IMR-90 (cell line): ENCODE measurements at regions of chr12 and their contacts with region 1.

Region 1: GRCh38 chr12:19994970-19995369 is 373.4 kb upstream of the PDE3A start:
- DNase-seq: no peak
- ATAC-seq: no peak
- H3K4me3 ChIP-seq: no peak overlapping the region
- H3K27ac ChIP-seq: no peak overlapping the region
- H3K4me1 ChIP-seq: peaks cover 5% of the 10 kb centered on the region
- H3K27me3 ChIP-seq: no peaks in the 10 kb centered on the region
- CTCF ChIP-seq: 0 out of 2 replicates have a peak, but pooled peaks have one; percentile 25
- POLR2A ChIP-seq: no peak
- RAD21 ChIP-seq: no peak

Region 2: GRCh38 chr12:19719672-19720071 is 275.3 kb before region 1 on chr12:
- CTCF ChIA-PET with region 1: no interaction called
- POLR2A ChIA-PET with region 1: no interaction called
- dilution Hi-C with region 1: no loop called
- in situ Hi-C with region 1: no loop called
- intact Hi-C with region 1: no loop called
- DNase-seq: no peak
- ATAC-seq: no peak
- H3K4me3 ChIP-seq: no peak overlapping the region
- H3K27ac ChIP-seq: no peak overlapping the region
- H3K4me1 ChIP-seq: no peaks in the 10 kb centered on the region; the same call in 1 of the 2 replicates
- H3K27me3 ChIP-seq: no peaks in the 10 kb centered on the region
- CTCF ChIP-seq: no peak
- POLR2A ChIP-seq: no peak
- RAD21 ChIP-seq: no peak

Region 3: DNA sequence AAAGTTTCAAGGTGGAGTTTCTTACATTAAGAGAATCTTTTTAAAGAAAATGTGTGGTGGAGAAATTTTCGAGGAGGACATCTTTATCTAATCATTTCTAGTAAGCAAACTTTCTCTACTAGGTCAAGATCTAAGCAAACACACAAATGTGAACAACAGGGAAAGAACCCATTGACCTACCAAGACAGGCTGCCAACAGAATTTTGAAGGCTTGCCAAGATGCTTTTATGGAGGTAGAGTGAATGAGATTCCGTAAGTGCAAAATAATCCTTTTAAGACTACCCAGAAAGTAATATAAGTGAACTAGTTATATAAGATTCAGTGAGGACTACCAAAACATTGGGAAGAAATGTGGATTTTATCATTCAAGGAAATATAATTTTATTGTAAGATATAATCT is 16.2 kb after region 1 on chr12:
- CTCF ChIA-PET with region 1: no interaction called
- POLR2A ChIA-PET with region 1: no interaction called
- dilution Hi-C with region 1: no loop called
- in situ Hi-C with region 1: no loop called
- intact Hi-C with region 1: no loop called
- DNase-seq: no peak
- ATAC-seq: no peak
- H3K4me3 ChIP-seq: no peak overlapping the region
- H3K27ac ChIP-seq: no peak overlapping the region
- H3K4me1 ChIP-seq: no peaks in the 10 kb centered on the region
- H3K27me3 ChIP-seq: no peaks in the 10 kb centered on the region
- CTCF ChIP-seq: no peak
- POLR2A ChIP-seq: no peak
- RAD21 ChIP-seq: no peak

Region 4: GRCh38 chr12:20383612-20384011 is 388.6 kb after region 1 on chr12:
- CTCF ChIA-PET with region 1: no interaction called
- POLR2A ChIA-PET with region 1: no interaction called
- dilution Hi-C with region 1: no loop called
- in situ Hi-C with region 1: no loop called
- intact Hi-C with region 1: no loop called
- DNase-seq: no peak
- ATAC-seq: no peak
- H3K4me3 ChIP-seq: no peak overlapping the region
- H3K27ac ChIP-seq: no peak overlapping the region
- H3K4me1 ChIP-seq: no peaks in the 10 kb centered on the region
- H3K27me3 ChIP-seq: no peaks in the 10 kb centered on the region
- CTCF ChIP-seq: no peak
- POLR2A ChIP-seq: no peak
- RAD21 ChIP-seq: no peak

Region 5: GRCh38 chr12:20601668-20602280 is 606.8 kb after region 1 on chr12:
- CTCF ChIA-PET with region 1: no interaction called
- POLR2A ChIA-PET with region 1: no interaction called
- dilution Hi-C with region 1: no loop called
- in situ Hi-C with region 1: no loop called
- intact Hi-C with region 1: loop called (anchors 5 kb)
- DNase-seq: peak; percentile 73
- ATAC-seq: peak; percentile 52
- H3K4me3 ChIP-seq: no peak overlapping the region
- H3K27ac ChIP-seq: no peak overlapping the region
- H3K4me1 ChIP-seq: no peaks in the 10 kb centered on the region; the same call in 1 of the 2 replicates
- H3K27me3 ChIP-seq: no peaks in the 10 kb centered on the region
- CTCF ChIP-seq: peak; percentile 66
- POLR2A ChIP-seq: no peak
- RAD21 ChIP-seq: peak; percentile 54